ENCODE measurements at regions of chr1 and their contacts with region 1.

Region 1: DNA sequence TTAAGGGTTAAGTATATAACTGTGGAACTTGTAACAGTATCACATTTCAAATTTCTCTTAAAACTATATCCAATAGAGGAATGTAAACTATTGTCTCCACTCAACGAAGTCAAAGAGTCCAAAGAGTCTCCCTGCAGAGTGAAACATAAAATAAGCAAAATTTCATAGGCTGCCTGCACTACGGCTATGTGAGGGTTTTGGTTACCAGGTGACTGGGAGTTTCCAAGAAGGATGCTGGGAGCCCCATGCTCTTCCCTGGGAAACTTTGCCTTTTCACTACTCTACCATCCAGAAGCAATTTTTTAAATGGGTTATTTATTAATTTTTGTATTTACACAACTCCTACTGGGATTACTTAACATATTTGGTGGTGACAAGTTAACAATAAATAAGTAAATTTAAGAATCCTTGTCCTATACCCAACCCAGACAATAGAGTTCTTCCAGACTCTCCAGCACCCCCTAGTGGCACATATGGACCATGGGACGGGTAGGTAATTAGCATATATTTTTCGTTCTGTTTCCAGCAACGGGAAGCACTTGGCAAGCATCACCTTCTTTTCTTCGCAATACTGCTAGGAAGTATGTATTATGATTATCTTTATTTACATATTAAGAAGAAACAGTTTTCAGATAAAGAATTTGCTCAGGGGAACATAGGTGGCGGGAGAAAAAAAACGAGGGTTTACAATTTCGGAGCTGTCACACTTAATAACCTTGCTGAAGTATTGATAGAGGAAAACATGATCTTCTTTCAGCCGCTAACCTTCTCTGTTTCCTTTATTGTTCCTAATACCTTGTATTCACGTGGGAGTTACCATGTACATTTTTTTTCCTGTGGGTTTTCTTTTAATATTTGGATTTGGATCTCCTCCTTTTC is 3.5 kb downstream of the FMO2 start:
- DNase-seq: peak; percentile 65
- H3K4me3 Mint-ChIP-seq: no peak overlapping the region
- H3K27ac Mint-ChIP-seq: no peak overlapping the region
- H3K4me1 Mint-ChIP-seq: no peaks in the 10 kb centered on the region
- H3K27me3 Mint-ChIP-seq: peaks cover 5% of the 10 kb centered on the region

Region 2: GRCh38 chr1:170967042-170967910 is 221.4 kb before region 1 on chr1:
- CTCF ChIA-PET with region 1: interaction called, 8 read pairs
- intact Hi-C with region 1: loop called (anchors 2 kb)
- DNase-seq: peak; percentile 5
- H3K4me3 Mint-ChIP-seq: no peak overlapping the region
- H3K27ac Mint-ChIP-seq: no peak overlapping the region
- H3K4me1 Mint-ChIP-seq: no peaks in the 10 kb centered on the region
- H3K27me3 Mint-ChIP-seq: peaks cover 30% of the 10 kb centered on the region

Region 3: DNA sequence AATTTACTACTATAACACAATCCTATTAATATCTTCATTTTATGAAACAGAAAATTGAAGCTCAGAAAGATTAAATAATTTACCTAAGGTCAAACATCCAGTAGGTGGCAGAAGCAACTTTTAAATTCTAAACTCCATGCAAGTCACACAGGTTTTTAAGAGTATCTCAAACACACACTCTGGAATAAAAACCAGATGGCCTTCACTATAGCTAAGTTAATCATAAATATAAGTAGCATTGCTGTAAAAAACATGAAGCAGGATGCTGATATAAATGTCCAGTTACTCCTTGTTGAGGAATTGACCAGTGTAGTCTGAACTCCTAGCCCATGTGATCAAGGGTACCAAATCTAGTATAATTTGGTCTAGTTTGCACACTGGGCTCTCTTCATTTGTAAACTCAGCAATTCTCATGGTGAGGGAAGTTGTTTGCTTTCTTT is 107.3 kb before region 1 on chr1:
- CTCF ChIA-PET with region 1: interaction called, 3 read pairs
- intact Hi-C with region 1: loop called (anchors 1 kb)
- DNase-seq: no peak
- H3K4me3 Mint-ChIP-seq: no peak overlapping the region
- H3K27ac Mint-ChIP-seq: no peak overlapping the region
- H3K4me1 Mint-ChIP-seq: no peaks in the 10 kb centered on the region
- H3K27me3 Mint-ChIP-seq: peaks cover 4% of the 10 kb centered on the region

Region 4: GRCh38 chr1:171110621-171111326 is 77.9 kb before region 1 on chr1:
- CTCF ChIA-PET with region 1: no interaction called
- intact Hi-C with region 1: no loop called
- DNase-seq: no peak
- H3K4me3 Mint-ChIP-seq: no peak overlapping the region
- H3K27ac Mint-ChIP-seq: no peak overlapping the region
- H3K4me1 Mint-ChIP-seq: no peaks in the 10 kb centered on the region
- H3K27me3 Mint-ChIP-seq: peaks cover 7% of the 10 kb centered on the region

Region 5: GRCh38 chr1:171595324-171595723 is 406.7 kb after region 1 on chr1:
- CTCF ChIA-PET with region 1: no interaction called
- intact Hi-C with region 1: no loop called
- DNase-seq: no peak
- H3K4me3 Mint-ChIP-seq: no peak overlapping the region
- H3K27ac Mint-ChIP-seq: peak overlapping the region; percentile 37
- H3K4me1 Mint-ChIP-seq: peaks cover 2% of the 10 kb centered on the region
- H3K27me3 Mint-ChIP-seq: no peaks in the 10 kb centered on the region

Measured in activated naive CD4-positive, alpha-beta T cell treated with anti-CD3 and anti-CD28 coated beads for 36 hours (primary cell).